ENCODE measurements at regions of chr1 and their contacts with region 1.

Region 1: GRCh38 chr1:12619792-12620487 is 1.9 kb upstream of the DHRS3 start:
- DNase-seq: peak; percentile 74
- ATAC-seq: peak; percentile 51
- H3K4me3 ChIP-seq: peak overlapping the region; percentile 71 to 75
- H3K27ac ChIP-seq: peak overlapping the region; percentile 97
- H3K4me1 ChIP-seq: peaks cover 27 to 49% of the 10 kb centered on the region in 2 experiments
- H3K27me3 ChIP-seq: no peaks in the 10 kb centered on the region
- CTCF ChIP-seq: peak in 2 of 3 experiments; percentile 94 to 95; a peak in 4 of 6 replicates
- POLR2A ChIP-seq: no peak
- RAD21 ChIP-seq: no peak

Region 2: GRCh38 chr1:12275369-12275768 is 344.6 kb before region 1 on chr1:
- CTCF ChIA-PET with region 1: interaction called, 16 read pairs
- POLR2A ChIA-PET with region 1: no interaction called
- RAD21 ChIA-PET with region 1: interaction called, 3 read pairs
- intact Hi-C with region 1: loop called (anchors 1 kb)
- DNase-seq: no peak
- ATAC-seq: peak; percentile 70
- H3K4me3 ChIP-seq: no peak overlapping the region
- H3K27ac ChIP-seq: no peak overlapping the region
- H3K4me1 ChIP-seq: no peaks in the 10 kb centered on the region
- H3K27me3 ChIP-seq: no peaks in the 10 kb centered on the region
- CTCF ChIP-seq: peak; percentile 64 to 92 (median 80)
- POLR2A ChIP-seq: no peak
- RAD21 ChIP-seq: peak; percentile 66

Region 3: GRCh38 chr1:12305377-12305776 is 314.6 kb before region 1 on chr1:
- CTCF ChIA-PET with region 1: no interaction called
- POLR2A ChIA-PET with region 1: no interaction called
- RAD21 ChIA-PET with region 1: no interaction called
- intact Hi-C with region 1: no loop called
- DNase-seq: no peak
- ATAC-seq: no peak
- H3K4me3 ChIP-seq: no peak overlapping the region
- H3K27ac ChIP-seq: no peak overlapping the region
- H3K4me1 ChIP-seq: no peaks in the 10 kb centered on the region
- H3K27me3 ChIP-seq: no peaks in the 10 kb centered on the region
- CTCF ChIP-seq: no peak
- POLR2A ChIP-seq: no peak
- RAD21 ChIP-seq: no peak

Region 4: GRCh38 chr1:12407050-12407961 is 212.6 kb before region 1 on chr1:
- CTCF ChIA-PET with region 1: interaction called, 3 read pairs
- POLR2A ChIA-PET with region 1: no interaction called
- RAD21 ChIA-PET with region 1: no interaction called
- intact Hi-C with region 1: loop called (anchors 1 kb)
- DNase-seq: peak; percentile 12
- ATAC-seq: peak; percentile 65
- H3K4me3 ChIP-seq: no peak overlapping the region
- H3K27ac ChIP-seq: no peak overlapping the region
- H3K4me1 ChIP-seq: peaks cover 0 to 15% of the 10 kb centered on the region in 2 experiments; a peak in 1 of 4 replicates
- H3K27me3 ChIP-seq: no peaks in the 10 kb centered on the region
- CTCF ChIP-seq: peak; percentile 31 to 50 (median 42); a peak in 4 of 6 replicates
- POLR2A ChIP-seq: no peak
- RAD21 ChIP-seq: peak; percentile 83

Region 5: GRCh38 chr1:12477936-12478611 is 141.9 kb before region 1 on chr1:
- CTCF ChIA-PET with region 1: interaction called, 6 read pairs
- POLR2A ChIA-PET with region 1: interaction called, 10 read pairs
- RAD21 ChIA-PET with region 1: interaction called, 4 read pairs
- intact Hi-C with region 1: loop called (anchors 2 kb)
- DNase-seq: peak; percentile 96
- ATAC-seq: peak; percentile 81
- H3K4me3 ChIP-seq: peak overlapping the region; percentile 16 to 31; a peak in 3 of 4 replicates
- H3K27ac ChIP-seq: peak overlapping the region; percentile 84
- H3K4me1 ChIP-seq: peaks cover 75 to 95% of the 10 kb centered on the region in 2 experiments
- H3K27me3 ChIP-seq: no peaks in the 10 kb centered on the region
- CTCF ChIP-seq: no peak
- POLR2A ChIP-seq: no peak
- RAD21 ChIP-seq: no peak

Region 6: GRCh38 chr1:12596007-12596821 is 23.7 kb before region 1 on chr1:
- CTCF ChIA-PET with region 1: interaction called, 17 read pairs
- POLR2A ChIA-PET with region 1: interaction called, 7 read pairs
- RAD21 ChIA-PET with region 1: interaction called, 3 to 12 read pairs
- intact Hi-C with region 1: loop called (anchors 1 kb)
- DNase-seq: no peak
- ATAC-seq: peak; percentile 81
- H3K4me3 ChIP-seq: peak overlapping the region; percentile 32 to 54
- H3K27ac ChIP-seq: peak overlapping the region; percentile 76
- H3K4me1 ChIP-seq: peaks cover 46 to 81% of the 10 kb centered on the region in 2 experiments
- H3K27me3 ChIP-seq: no peaks in the 10 kb centered on the region
- CTCF ChIP-seq: no peak
- POLR2A ChIP-seq: no peak
- RAD21 ChIP-seq: no peak

Region 7: DNA sequence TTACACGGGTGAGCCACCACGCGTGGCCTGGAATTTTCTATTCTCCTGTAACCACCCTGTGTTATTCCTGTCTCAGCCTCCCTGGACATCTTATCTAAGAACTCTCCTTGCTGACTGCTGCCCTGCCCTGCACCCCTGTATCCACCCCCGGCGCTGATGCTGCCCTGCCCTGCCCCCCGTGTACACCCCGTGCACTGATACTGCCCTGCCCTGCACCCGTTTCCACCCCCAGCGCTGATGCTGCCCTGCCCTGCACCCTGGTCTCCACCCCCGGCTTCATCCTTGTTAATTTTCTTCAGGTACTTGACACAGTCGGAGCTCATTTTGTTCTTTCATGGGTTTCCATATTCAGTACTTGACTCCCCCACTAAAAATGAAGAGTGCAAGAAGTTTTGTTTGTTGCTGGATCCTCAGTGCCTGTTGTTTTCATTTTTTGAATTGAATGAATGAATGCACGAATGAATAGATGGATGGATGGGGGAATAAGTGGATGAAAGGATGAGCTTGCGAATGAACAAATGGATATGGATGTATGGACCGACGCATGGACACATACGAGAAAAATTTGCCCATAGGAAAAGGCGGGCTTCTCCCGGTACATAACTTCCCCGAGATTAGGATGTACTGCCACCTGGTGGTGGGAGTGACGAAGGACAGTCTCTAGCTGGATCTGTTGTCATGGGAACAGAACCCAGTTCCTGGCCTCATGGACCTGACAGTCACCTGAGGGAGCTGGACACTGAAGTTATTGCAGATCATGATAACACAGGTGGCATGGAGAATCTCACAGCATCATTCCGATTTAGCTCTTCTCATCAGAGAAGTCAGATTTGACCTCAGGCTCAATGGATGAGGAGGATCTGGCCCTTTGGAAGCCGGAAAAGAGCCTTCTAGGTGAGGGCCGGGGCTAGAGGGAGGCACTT is 38.9 kb after region 1 on chr1:
- CTCF ChIA-PET with region 1: interaction called, 8 read pairs
- POLR2A ChIA-PET with region 1: no interaction called
- RAD21 ChIA-PET with region 1: interaction called in 1 of 2 experiments, 4 read pairs
- intact Hi-C with region 1: loop called (anchors 1 kb)
- DNase-seq: peak; percentile 81
- ATAC-seq: peak; percentile 96
- H3K4me3 ChIP-seq: no peak overlapping the region
- H3K27ac ChIP-seq: no peak overlapping the region
- H3K4me1 ChIP-seq: peaks cover 0 to 6% of the 10 kb centered on the region in 2 experiments; a peak in 1 of 4 replicates
- H3K27me3 ChIP-seq: no peaks in the 10 kb centered on the region
- CTCF ChIP-seq: peak; percentile 87 to 95 (median 91)
- POLR2A ChIP-seq: no peak
- RAD21 ChIP-seq: peak; percentile 99